ENCODE measurements at regions of chr1 and their contacts with region 1.

Region 1: GRCh38 chr1:6489799-6490180 is 1.7 kb downstream of the PLEKHG5 start:
- DNase-seq: peak; percentile 75 to 91
- ATAC-seq: peak; percentile 74
- H3K4me3 ChIP-seq: peak overlapping the region; percentile 62
- H3K27ac ChIP-seq: no peak overlapping the region
- H3K4me1 ChIP-seq: no peaks in the 10 kb centered on the region
- H3K27me3 ChIP-seq: no peaks in the 10 kb centered on the region

Region 2: GRCh38 chr1:6423321-6423999 is 66.3 kb before region 1 on chr1:
- intact Hi-C with region 1: no loop called
- DNase-seq: no peak
- ATAC-seq: no peak
- H3K4me3 ChIP-seq: no peak overlapping the region
- H3K27ac ChIP-seq: no peak overlapping the region
- H3K4me1 ChIP-seq: no peaks in the 10 kb centered on the region
- H3K27me3 ChIP-seq: peaks cover 0 to 2% of the 10 kb centered on the region in 2 donors

Region 3: GRCh38 chr1:6523566-6523965 is 33.8 kb after region 1 on chr1:
- intact Hi-C with region 1: loop called in 1 of 2 experiments (anchors 5 kb)
- DNase-seq: peak; percentile 37 to 48
- ATAC-seq: no peak
- H3K4me3 ChIP-seq: no peak overlapping the region
- H3K27ac ChIP-seq: no peak overlapping the region
- H3K4me1 ChIP-seq: peaks cover 0 to 4% of the 10 kb centered on the region in 2 donors
- H3K27me3 ChIP-seq: no peaks in the 10 kb centered on the region

Region 4: DNA sequence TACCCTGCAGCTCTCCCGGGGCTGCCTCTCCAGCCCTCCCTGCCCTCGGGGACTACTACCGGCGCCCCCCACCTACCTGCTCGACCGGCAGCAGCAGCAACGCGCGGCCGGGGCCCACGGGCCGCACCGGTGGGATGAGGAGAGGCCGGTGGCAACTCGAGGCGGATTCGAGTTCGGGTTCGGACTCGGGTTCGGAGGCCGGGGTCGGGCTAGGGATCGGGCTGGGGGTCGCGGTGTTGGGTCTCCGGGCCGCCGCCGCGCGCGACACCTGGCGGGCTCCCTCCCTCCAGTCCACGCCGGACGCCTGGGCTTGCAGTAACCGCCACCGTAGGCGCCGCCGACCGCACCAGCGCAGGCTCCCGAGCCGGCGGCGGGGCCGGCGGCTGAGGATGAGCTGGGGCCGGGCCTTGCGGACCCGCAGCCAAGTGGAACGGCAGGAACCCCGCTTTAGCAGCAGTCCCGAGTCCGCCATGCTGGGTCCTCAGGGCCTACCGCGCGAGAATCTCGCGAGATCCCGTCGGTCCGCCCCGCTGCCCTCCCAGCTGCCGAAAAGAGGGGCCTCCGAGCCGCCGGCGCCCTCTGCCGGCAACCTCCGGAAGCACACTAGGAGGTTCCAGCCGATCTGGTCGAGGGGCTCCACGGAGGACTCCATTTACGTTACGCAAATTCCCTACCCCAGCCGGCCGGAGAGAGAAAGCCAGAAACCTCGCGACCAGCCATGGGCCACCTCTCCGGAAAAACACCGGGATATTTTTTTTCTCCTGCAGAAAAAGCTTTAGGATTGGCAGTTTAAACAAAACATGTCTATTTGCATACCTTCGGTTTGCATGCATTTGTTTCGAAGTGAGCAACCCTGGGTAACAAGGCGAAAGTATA is 64.5 kb after region 1 on chr1 and contains the start of gene NOL9:
- intact Hi-C with region 1: loop called in 1 of 2 experiments (anchors 2 kb)
- DNase-seq: peak; percentile 97 to 99
- ATAC-seq: peak; percentile 99
- H3K4me3 ChIP-seq: peak within 1 kb of the TSS; percentile 82 to 85
- H3K27ac ChIP-seq: peak within 1 kb of the TSS in 1 of 2 donors; percentile 50
- H3K4me1 ChIP-seq: peaks cover 0 to 3% of the 10 kb centered on the region in 2 donors
- H3K27me3 ChIP-seq: no peaks in the 10 kb centered on the region
- total RNA-seq, gene NOL9: 25.9 to 27.0 TPM

Region 5: DNA sequence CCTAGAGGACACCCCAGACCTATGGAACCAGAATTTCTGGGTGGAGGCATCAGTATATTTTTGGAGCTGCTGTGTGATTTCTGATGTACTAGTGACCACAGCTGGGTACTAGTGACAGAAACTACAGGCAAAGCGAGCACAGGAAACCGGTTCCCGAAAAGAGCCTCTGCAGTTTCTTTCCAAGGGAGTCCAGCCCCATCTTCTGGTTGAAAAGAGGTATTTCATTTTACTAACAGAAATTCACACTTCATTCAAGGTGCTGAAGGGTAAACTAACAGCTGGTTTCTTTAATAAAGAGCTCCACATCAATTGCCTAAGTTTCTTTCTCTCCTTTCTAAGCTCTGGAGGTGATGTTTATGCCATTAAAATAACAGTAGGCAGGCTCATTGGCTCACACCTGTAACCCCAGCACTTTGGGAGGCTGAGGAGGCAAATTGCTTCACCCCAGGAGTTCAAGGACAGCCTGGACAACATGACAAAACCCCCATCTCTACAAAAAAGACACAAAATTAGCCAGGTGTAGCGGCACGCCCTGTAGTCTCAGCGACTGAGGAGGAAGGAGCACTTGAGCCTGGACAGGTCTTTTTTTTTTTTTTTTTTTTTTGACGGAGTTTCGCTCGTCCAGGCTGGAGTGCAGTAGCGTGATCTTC is 156.8 kb after region 1 on chr1:
- intact Hi-C with region 1: loop called (anchors 2 to 5 kb)
- DNase-seq: no peak
- ATAC-seq: peak; percentile 72
- H3K4me3 ChIP-seq: no peak overlapping the region
- H3K27ac ChIP-seq: no peak overlapping the region
- H3K4me1 ChIP-seq: no peaks in the 10 kb centered on the region
- H3K27me3 ChIP-seq: no peaks in the 10 kb centered on the region

Measured in aorta (tissue), 5 donors.